ENCODE measurements at regions of chr6 and their contacts with region 1.

Region 1: DNA sequence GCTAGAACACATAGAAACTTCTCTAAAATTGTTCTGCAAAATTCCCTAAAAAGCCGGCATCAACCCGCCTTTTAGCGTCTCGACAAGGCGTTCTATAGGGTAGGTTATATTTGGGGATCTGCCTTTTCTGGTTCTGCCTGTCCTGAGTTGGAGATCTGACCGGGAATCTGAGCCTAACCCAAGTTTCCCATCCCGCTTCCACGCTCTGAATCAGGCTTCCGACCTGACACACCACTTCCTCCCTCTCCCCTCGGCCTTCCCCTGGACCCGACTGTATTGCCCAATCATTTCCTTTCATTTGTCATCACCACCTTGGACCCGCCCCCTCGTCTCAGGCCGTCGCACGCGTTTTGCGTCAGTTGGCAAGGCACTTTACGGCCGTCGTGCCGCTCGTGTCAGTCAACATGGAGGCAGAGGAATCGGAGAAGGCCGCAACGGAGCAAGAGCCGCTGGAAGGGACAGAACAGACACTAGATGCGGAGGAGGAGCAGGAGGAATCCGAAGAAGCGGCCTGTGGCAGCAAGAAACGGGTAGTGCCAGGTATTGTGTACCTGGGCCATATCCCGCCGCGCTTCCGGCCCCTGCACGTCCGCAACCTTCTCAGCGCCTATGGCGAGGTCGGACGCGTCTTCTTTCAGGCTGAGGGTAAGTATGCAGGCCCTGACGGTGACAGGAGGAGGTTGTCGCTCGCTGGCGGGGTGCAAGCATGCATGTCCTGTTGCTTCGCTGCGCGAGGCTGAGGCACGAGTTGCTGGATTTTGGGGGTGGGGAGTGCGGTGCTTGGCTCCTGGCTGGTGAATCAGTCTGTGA is at the start of gene ABT1:
- DNase-seq: peak; percentile 98
- ATAC-seq: peak; percentile 93
- H3K4me3 ChIP-seq: peak within 1 kb of the TSS; percentile 84 to 99 (median 91)
- H3K4me3 Mint-ChIP-seq: no peak within 1 kb of the TSS
- H3K27ac ChIP-seq: peak within 1 kb of the TSS; percentile 88 to 89
- H3K27ac Mint-ChIP-seq: no peak within 1 kb of the TSS
- H3K4me1 ChIP-seq: peaks cover 14 to 24% of the 10 kb centered on the region in 2 donors
- H3K4me1 Mint-ChIP-seq: peaks cover 20% of the 10 kb centered on the region
- H3K27me3 ChIP-seq: peaks cover 2 to 20% (median 9%) of the 10 kb centered on the region in 4 experiments
- H3K27me3 Mint-ChIP-seq: peaks cover 8% of the 10 kb centered on the region
- CTCF ChIP-seq: no peak
- total RNA-seq, gene ABT1: 28.6 and 29.8 TPM in 2 replicates

Region 2: GRCh38 chr6:26025894-26026832 is 570.6 kb before region 1 on chr6:
- CTCF ChIA-PET with region 1: no interaction called
- POLR2A ChIA-PET with region 1: no interaction called
- intact Hi-C with region 1: loop called (anchors 10 kb)
- DNase-seq: peak; percentile 97
- ATAC-seq: peak; percentile 35
- H3K4me3 ChIP-seq: peak overlapping the region; percentile 58 to 99 (median 88)
- H3K4me3 Mint-ChIP-seq: peak overlapping the region; percentile 98
- H3K27ac ChIP-seq: peak overlapping the region; percentile 88 to 97
- H3K27ac Mint-ChIP-seq: peak overlapping the region; percentile 98
- H3K4me1 ChIP-seq: peaks cover 23 to 32% of the 10 kb centered on the region in 2 donors
- H3K4me1 Mint-ChIP-seq: peaks cover 49% of the 10 kb centered on the region
- H3K27me3 ChIP-seq: no peaks in the 10 kb centered on the region
- H3K27me3 Mint-ChIP-seq: no peaks in the 10 kb centered on the region
- CTCF ChIP-seq: peak; percentile 92

Region 3: GRCh38 chr6:26322645-26323482 is 273.9 kb before region 1 on chr6:
- CTCF ChIA-PET with region 1: interaction called, 7 read pairs
- POLR2A ChIA-PET with region 1: no interaction called
- intact Hi-C with region 1: loop called (anchors 5 kb)
- DNase-seq: peak; percentile 83
- ATAC-seq: peak; percentile 59
- H3K4me3 ChIP-seq: peak overlapping the region in 4 of 5 experiments; percentile 49 to 74 (median 59)
- H3K4me3 Mint-ChIP-seq: peak overlapping the region; percentile 74
- H3K27ac ChIP-seq: no peak overlapping the region
- H3K27ac Mint-ChIP-seq: peak overlapping the region; percentile 70
- H3K4me1 ChIP-seq: peaks cover 14 to 31% of the 10 kb centered on the region in 2 donors
- H3K4me1 Mint-ChIP-seq: peaks cover 22% of the 10 kb centered on the region
- H3K27me3 ChIP-seq: peaks cover 0 to 43% (median 25%) of the 10 kb centered on the region in 4 experiments
- H3K27me3 Mint-ChIP-seq: peaks cover 26% of the 10 kb centered on the region
- CTCF ChIP-seq: no peak

Region 4: GRCh38 chr6:26473758-26474438 is 122.9 kb before region 1 on chr6:
- CTCF ChIA-PET with region 1: interaction called, 7 read pairs
- POLR2A ChIA-PET with region 1: no interaction called
- intact Hi-C with region 1: loop called (anchors 5 kb)
- DNase-seq: peak; percentile 94
- ATAC-seq: peak; percentile 94
- H3K4me3 ChIP-seq: peak overlapping the region; percentile 55 to 88 (median 67)
- H3K4me3 Mint-ChIP-seq: peak overlapping the region; percentile 92
- H3K27ac ChIP-seq: peak overlapping the region; percentile 92 to 94
- H3K27ac Mint-ChIP-seq: peak overlapping the region; percentile 98
- H3K4me1 ChIP-seq: peaks cover 58 to 61% of the 10 kb centered on the region in 2 donors
- H3K4me1 Mint-ChIP-seq: peaks cover 64% of the 10 kb centered on the region
- H3K27me3 ChIP-seq: no peaks in the 10 kb centered on the region
- H3K27me3 Mint-ChIP-seq: no peaks in the 10 kb centered on the region
- CTCF ChIP-seq: no peak

Region 5: DNA sequence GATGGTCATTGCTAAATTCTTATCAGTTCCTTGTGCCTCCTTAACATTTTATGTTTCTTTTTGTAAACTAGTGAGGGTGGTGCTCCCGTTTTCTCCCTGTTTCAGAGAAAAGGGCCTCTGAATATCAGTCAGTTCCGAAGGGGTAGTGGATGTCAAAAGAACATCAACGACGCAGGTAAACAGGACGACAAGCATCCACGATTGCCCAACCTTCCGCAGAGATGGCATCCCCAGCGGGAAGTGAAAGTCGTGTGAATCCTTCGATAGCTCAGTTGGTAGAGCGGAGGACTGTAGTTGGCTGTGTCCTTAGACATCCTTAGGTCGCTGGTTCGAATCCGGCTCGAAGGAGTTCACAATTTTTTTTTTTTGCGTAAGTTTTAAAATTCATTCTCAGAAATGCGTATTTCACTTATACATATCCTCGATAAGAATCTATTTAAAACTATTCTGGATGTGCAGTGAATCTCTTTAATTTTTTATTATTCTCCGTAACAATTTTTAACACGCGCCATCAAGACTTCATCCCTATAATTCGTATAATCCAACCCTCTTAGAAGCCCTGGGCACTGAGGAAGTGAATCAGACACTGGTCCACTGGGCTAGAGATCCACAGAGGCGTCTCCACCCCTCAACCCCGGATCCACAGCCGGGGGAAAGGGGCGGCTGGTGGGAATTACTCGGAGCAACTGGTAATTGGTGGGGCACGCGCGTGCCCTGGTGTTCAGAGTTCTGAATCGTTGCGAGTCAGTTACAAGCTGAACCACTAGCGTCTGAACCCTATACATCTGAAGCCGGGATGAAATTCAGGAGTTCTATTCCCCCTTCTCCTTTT is 28.0 kb before region 1 on chr6:
- CTCF ChIA-PET with region 1: interaction called, 132 read pairs
- POLR2A ChIA-PET with region 1: no interaction called
- intact Hi-C with region 1: loop called (anchors 1 kb)
- DNase-seq: peak; percentile 97
- ATAC-seq: peak; percentile 82
- H3K4me3 ChIP-seq: peak overlapping the region; percentile 49 to 88 (median 69)
- H3K4me3 Mint-ChIP-seq: peak overlapping the region; percentile 97
- H3K27ac ChIP-seq: peak overlapping the region; percentile 18 to 56
- H3K27ac Mint-ChIP-seq: peak overlapping the region; percentile 100
- H3K4me1 ChIP-seq: peaks cover 14 to 17% of the 10 kb centered on the region in 2 donors
- H3K4me1 Mint-ChIP-seq: peaks cover 28% of the 10 kb centered on the region
- H3K27me3 ChIP-seq: no peaks in the 10 kb centered on the region
- H3K27me3 Mint-ChIP-seq: peaks cover 3% of the 10 kb centered on the region
- CTCF ChIP-seq: no peak

Region 6: GRCh38 chr6:27177485-27178406 is 581.0 kb after region 1 on chr6:
- CTCF ChIA-PET with region 1: no interaction called
- POLR2A ChIA-PET with region 1: no interaction called
- intact Hi-C with region 1: loop called (anchors 5 kb)
- DNase-seq: peak; percentile 90
- ATAC-seq: peak; percentile 86
- H3K4me3 ChIP-seq: peak overlapping the region; percentile 88 to 100 (median 98)
- H3K4me3 Mint-ChIP-seq: peak overlapping the region; percentile 96
- H3K27ac ChIP-seq: peak overlapping the region; percentile 34 to 78
- H3K27ac Mint-ChIP-seq: peak overlapping the region; percentile 91
- H3K4me1 ChIP-seq: peaks cover 0 to 7% of the 10 kb centered on the region in 2 donors
- H3K4me1 Mint-ChIP-seq: peaks cover 15% of the 10 kb centered on the region
- H3K27me3 ChIP-seq: no peaks in the 10 kb centered on the region
- H3K27me3 Mint-ChIP-seq: no peaks in the 10 kb centered on the region
- CTCF ChIP-seq: peak; percentile 71

Region 7: GRCh38 chr6:27687154-27688013 is 1090.6 kb after region 1 on chr6:
- CTCF ChIA-PET with region 1: no interaction called
- POLR2A ChIA-PET with region 1: no interaction called
- intact Hi-C with region 1: loop called (anchors 10 kb)
- DNase-seq: peak; percentile 87
- ATAC-seq: peak; percentile 73
- H3K4me3 ChIP-seq: peak overlapping the region; percentile 27 to 99 (median 77)
- H3K4me3 Mint-ChIP-seq: peak overlapping the region; percentile 93
- H3K27ac ChIP-seq: peak overlapping the region in 1 of 2 donors; percentile 32
- H3K27ac Mint-ChIP-seq: peak overlapping the region; percentile 91
- H3K4me1 ChIP-seq: peaks cover 7 to 15% of the 10 kb centered on the region in 2 donors
- H3K4me1 Mint-ChIP-seq: peaks cover 16% of the 10 kb centered on the region
- H3K27me3 ChIP-seq: peaks cover 0 to 8% (median 2%) of the 10 kb centered on the region in 4 experiments
- H3K27me3 Mint-ChIP-seq: peaks cover 4% of the 10 kb centered on the region
- CTCF ChIP-seq: peak; percentile 69